ENCODE measurements at regions of chr22 and their contacts with region 1.

Region 1: GRCh38 chr22:21001560-21002325 is at the start of gene THAP7:
- DNase-seq: peak; percentile 98
- H3K4me3 ChIP-seq: peak within 1 kb of the TSS; percentile 52 to 92 (median 76)
- H3K27ac ChIP-seq: peak within 1 kb of the TSS; percentile 96 to 99 (median 98)
- H3K4me1 ChIP-seq: peaks cover 0 to 39% (median 34%) of the 10 kb centered on the region in 4 donors
- H3K27me3 ChIP-seq: no peaks in the 10 kb centered on the region
- CTCF ChIP-seq: no peak
- EP300 ChIP-seq: peak in 1 of 4 donors; percentile 64
- POLR2A ChIP-seq: peak; percentile 86 to 88
- total RNA-seq, gene THAP7: 39.2 to 59.4 (median 45.4) TPM

Region 2: GRCh38 chr22:20829491-20830134 is 172.1 kb before region 1 on chr22:
- intact Hi-C with region 1: no loop called
- DNase-seq: no peak
- H3K4me3 ChIP-seq: no peak overlapping the region
- H3K27ac ChIP-seq: no peak overlapping the region
- H3K4me1 ChIP-seq: no peaks in the 10 kb centered on the region
- H3K27me3 ChIP-seq: no peaks in the 10 kb centered on the region
- CTCF ChIP-seq: no peak
- EP300 ChIP-seq: no peak
- POLR2A ChIP-seq: no peak

Region 3: GRCh38 chr22:20858615-20859416 is 142.9 kb before region 1 on chr22 and contains the starts of genes PI4KA and SNAP29:
- intact Hi-C with region 1: loop called (anchors 2 kb)
- DNase-seq: peak; percentile 100
- H3K4me3 ChIP-seq: peak within 1 kb of the TSS; percentile 65 to 97 (median 82)
- H3K27ac ChIP-seq: peak within 1 kb of the TSS; percentile 90 to 97 (median 93)
- H3K4me1 ChIP-seq: peaks cover 0 to 42% (median 37%) of the 10 kb centered on the region in 4 donors
- H3K27me3 ChIP-seq: no peaks in the 10 kb centered on the region
- CTCF ChIP-seq: no peak
- EP300 ChIP-seq: peak in 1 of 4 donors; percentile 58
- POLR2A ChIP-seq: peak; percentile 32 to 54
- total RNA-seq, gene PI4KA: 63.5 to 137 (median 75.0) TPM
- total RNA-seq, gene SNAP29: 20.0 to 25.5 (median 22.8) TPM

Region 4: GRCh38 chr22:20885557-20886323 is 116.0 kb before region 1 on chr22:
- intact Hi-C with region 1: loop called (anchors 10 kb)
- DNase-seq: peak; percentile 89
- H3K4me3 ChIP-seq: no peak overlapping the region
- H3K27ac ChIP-seq: peak overlapping the region; percentile 47 to 67 (median 57)
- H3K4me1 ChIP-seq: peaks cover 0 to 7% (median 4%) of the 10 kb centered on the region in 4 donors
- H3K27me3 ChIP-seq: no peaks in the 10 kb centered on the region
- CTCF ChIP-seq: peak; percentile 67 to 95 (median 84)
- EP300 ChIP-seq: no peak
- POLR2A ChIP-seq: no peak

Region 5: GRCh38 chr22:20916983-20917810 is 84.5 kb before region 1 on chr22 and contains the start of gene CRKL:
- intact Hi-C with region 1: loop called (anchors 10 kb)
- DNase-seq: peak; percentile 99
- H3K4me3 ChIP-seq: peak within 1 kb of the TSS; percentile 92 to 100 (median 96)
- H3K27ac ChIP-seq: peak within 1 kb of the TSS; percentile 95 to 100 (median 98)
- H3K4me1 ChIP-seq: peaks cover 0 to 39% (median 31%) of the 10 kb centered on the region in 4 donors
- H3K27me3 ChIP-seq: no peaks in the 10 kb centered on the region
- CTCF ChIP-seq: peak; percentile 81 to 92 (median 91)
- EP300 ChIP-seq: peak in 1 of 4 donors; percentile 7
- POLR2A ChIP-seq: peak; percentile 85 to 94
- total RNA-seq, gene CRKL: 35.6 to 37.1 (median 36.4) TPM

Region 6: DNA sequence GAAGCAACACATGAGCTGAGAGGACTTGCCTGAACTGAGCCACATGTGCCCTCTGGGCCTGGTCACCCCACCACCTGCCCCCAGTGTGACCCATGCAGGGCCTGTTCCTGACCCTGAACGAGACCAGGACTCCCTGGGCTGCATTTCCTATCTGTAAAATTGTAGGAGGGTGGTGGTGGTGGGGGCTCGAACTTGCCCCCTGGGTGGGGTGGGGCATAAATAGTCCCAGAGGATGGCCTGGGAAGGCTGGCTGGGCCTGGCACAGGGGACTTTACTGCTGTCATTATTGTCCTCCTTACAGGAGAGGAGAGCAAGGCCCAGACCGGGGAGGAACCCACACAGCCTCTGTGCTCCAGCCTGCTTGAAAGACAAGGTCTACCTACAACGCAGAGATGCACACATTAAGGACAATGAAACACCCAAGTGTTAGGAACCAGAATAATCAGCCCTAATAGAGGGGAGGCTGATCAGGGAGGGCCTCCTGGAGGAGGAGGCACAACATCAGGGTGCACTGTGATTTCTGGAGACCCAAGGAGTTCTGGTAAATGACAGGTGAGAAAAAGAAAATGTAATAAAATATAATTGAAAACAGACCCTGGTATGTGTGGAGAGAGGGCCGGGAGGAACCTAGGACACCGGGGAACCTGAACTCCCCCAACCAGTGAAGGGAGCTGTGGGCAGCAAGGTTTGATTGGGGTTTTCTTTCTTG is 37.5 kb before region 1 on chr22:
- intact Hi-C with region 1: loop called (anchors 5 kb)
- DNase-seq: no peak
- H3K4me3 ChIP-seq: peak overlapping the region in 3 of 4 donors; percentile 46 to 52 (median 47)
- H3K27ac ChIP-seq: no peak overlapping the region
- H3K4me1 ChIP-seq: peaks cover 0 to 28% (median 11%) of the 10 kb centered on the region in 4 donors
- H3K27me3 ChIP-seq: peaks cover 2 to 16% (median 13%) of the 10 kb centered on the region in 3 donors
- CTCF ChIP-seq: no peak
- EP300 ChIP-seq: no peak
- POLR2A ChIP-seq: no peak

Region 7: DNA sequence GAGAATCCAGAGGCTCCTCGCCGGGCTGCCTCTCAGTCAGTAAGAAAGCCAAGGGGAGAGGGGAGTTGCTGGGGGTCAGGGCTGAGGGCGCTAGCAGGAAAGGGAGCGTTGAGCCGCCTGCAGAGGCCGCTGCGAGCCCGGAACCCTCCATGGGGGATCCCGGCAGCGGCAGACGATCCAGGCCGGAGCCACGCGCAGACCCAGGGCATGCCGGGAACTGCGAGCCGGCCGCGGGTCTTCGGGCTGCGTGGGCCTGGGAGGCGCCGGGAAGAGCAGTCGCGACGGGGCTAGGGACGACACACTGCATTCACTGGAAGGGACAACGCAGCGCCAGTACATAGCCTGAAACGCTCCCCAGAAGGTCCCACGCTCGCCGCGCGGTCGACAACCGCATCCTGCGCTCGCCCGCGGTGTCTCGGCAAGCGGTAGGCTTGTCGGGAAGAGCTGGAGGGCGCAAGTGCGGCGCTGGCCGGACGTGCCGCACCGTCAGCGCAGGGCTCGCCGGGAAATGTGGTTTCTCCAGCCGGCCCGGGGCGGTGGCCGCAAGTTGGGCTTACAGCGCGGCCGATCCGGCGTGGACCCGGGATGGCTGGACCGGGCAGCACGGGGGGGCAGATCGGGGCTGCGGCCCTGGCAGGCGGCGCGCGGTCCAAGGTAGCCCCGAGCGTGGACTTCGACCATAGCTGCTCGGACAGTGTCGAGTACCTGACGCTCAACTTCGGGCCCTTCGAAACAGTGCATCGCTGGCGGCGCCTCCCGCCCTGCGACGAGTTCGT is 19.8 kb before region 1 on chr22 and contains the start of gene LZTR1:
- intact Hi-C with region 1: loop called (anchors 1 kb)
- DNase-seq: peak; percentile 89
- H3K4me3 ChIP-seq: peak within 1 kb of the TSS; percentile 69 to 91 (median 90)
- H3K27ac ChIP-seq: peak within 1 kb of the TSS; percentile 87 to 93 (median 90)
- H3K4me1 ChIP-seq: peaks cover 0 to 46% (median 43%) of the 10 kb centered on the region in 4 donors
- H3K27me3 ChIP-seq: no peaks in the 10 kb centered on the region
- CTCF ChIP-seq: peak in 2 of 4 experiments; percentile 19 to 53
- EP300 ChIP-seq: no peak
- POLR2A ChIP-seq: peak; percentile 88 to 95
- total RNA-seq, gene LZTR1: 30.8 to 50.4 (median 35.8) TPM

Region 8: GRCh38 chr22:21045585-21046294 is 44.0 kb after region 1 on chr22 and contains the start of gene LRRC74B:
- intact Hi-C with region 1: loop called (anchors 5 kb)
- DNase-seq: peak; percentile 94
- H3K4me3 ChIP-seq: peak within 1 kb of the TSS; percentile 16 to 54 (median 48)
- H3K27ac ChIP-seq: peak within 1 kb of the TSS in 3 of 4 donors; percentile 12 to 48 (median 45)
- H3K4me1 ChIP-seq: peaks cover 0 to 24% (median 18%) of the 10 kb centered on the region in 4 donors
- H3K27me3 ChIP-seq: no peaks in the 10 kb centered on the region
- CTCF ChIP-seq: no peak
- EP300 ChIP-seq: no peak
- POLR2A ChIP-seq: no peak
- total RNA-seq, gene LRRC74B: not detected

Measured in sigmoid colon (tissue), 7 donors.